Ovary (tissue), 10 donors: ENCODE measurements at regions of chr16 and their contacts with region 1.

Region 1: DNA sequence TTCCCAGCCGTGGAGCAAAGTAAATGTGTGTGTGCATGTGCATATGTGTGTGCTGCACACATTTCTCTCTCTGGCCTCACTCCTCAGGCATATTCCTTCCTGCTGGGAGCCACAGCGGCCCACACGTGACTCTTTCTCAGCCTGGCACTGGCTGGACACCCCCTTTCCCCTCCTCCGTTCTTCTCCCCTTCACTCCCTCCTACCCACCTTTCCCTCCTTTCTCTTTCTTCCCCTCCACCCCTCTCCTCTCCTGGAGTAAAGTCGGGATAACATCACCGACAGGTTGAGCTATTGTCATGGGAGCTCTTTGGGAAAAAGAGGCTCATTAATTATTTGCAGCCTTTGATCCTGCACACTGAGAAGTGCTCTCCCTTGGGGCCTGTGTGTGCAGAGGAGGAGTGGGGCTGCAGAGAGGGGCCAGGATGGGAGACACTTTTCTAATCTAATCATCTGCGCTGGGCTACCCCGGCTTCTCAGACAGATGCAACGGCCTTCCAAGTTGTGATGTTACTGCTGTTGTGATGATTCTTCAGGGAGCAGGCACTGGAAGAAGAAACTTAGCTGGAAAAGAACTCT is 126.3 kb upstream of the HSBP1 start:
- DNase-seq: no peak
- H3K4me3 ChIP-seq: no peak overlapping the region
- H3K27ac ChIP-seq: no peak overlapping the region
- H3K4me1 ChIP-seq: no peaks in the 10 kb centered on the region
- H3K27me3 ChIP-seq: no peaks in the 10 kb centered on the region
- CTCF ChIP-seq: no peak
- EP300 ChIP-seq: no peak
- POLR2A ChIP-seq: no peak

Region 2: DNA sequence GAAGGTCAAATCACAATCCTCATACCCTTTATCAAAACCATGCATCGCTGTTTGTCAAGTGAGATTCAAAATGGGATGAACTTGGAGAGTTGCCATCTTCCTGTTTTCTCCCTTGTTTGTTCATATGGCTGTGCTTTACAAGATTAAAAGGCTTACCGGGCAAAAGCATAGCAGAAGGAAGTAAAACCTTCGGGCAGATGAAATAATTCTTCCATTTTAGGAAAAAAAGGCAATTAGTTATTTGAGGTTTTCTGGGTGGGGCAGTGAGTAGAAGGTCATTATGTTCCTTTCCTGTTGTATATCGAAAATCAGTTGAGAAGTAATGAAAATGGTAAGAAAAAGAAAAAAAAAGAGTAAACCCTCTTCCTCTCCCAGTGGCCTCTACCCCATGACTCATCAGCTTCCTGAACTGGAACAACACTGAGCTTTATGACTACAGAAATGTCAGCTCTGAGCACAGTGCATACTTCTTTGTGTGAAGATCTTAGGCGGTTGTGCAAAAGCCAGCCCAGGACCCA is 685.5 kb before region 1 on chr16:
- intact Hi-C with region 1: loop called in 1 of 4 experiments (anchors 2 kb)
- DNase-seq: no peak
- H3K4me3 ChIP-seq: no peak overlapping the region
- H3K27ac ChIP-seq: no peak overlapping the region
- H3K4me1 ChIP-seq: no peaks in the 10 kb centered on the region
- H3K27me3 ChIP-seq: no peaks in the 10 kb centered on the region
- CTCF ChIP-seq: no peak
- EP300 ChIP-seq: no peak
- POLR2A ChIP-seq: no peak

Region 3: DNA sequence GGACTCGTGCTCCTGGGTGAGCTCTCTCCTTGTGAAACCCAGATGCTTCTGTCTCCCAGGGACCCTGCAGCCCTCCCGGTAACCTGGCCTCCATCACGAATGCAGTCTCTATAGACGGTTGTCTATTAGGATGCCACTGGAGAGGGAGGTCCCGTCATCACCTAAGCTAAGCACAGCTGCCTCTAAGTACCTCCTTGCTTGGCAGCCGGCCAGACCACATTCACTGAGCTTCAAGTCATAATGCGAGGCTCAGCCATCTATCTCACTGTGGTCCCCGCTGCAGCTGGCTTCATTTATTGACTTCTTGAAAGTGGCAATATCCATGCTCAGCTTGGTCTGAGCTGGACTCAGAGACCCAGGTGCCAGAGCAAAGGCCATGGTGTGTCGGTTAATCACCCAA is 51.8 kb after region 1 on chr16:
- intact Hi-C with region 1: no loop called
- DNase-seq: no peak
- H3K4me3 ChIP-seq: no peak overlapping the region
- H3K27ac ChIP-seq: no peak overlapping the region
- H3K4me1 ChIP-seq: no peaks in the 10 kb centered on the region
- H3K27me3 ChIP-seq: no peaks in the 10 kb centered on the region
- CTCF ChIP-seq: no peak
- EP300 ChIP-seq: no peak
- POLR2A ChIP-seq: no peak

Region 4: GRCh38 chr16:83771306-83771942 is 90.0 kb after region 1 on chr16:
- intact Hi-C with region 1: no loop called
- DNase-seq: peak in 2 of 5 donors; percentile 13 to 18
- H3K4me3 ChIP-seq: no peak overlapping the region
- H3K27ac ChIP-seq: no peak overlapping the region
- H3K4me1 ChIP-seq: no peaks in the 10 kb centered on the region
- H3K27me3 ChIP-seq: no peaks in the 10 kb centered on the region
- CTCF ChIP-seq: no peak
- EP300 ChIP-seq: no peak
- POLR2A ChIP-seq: no peak

Region 5: GRCh38 chr16:83856792-83857191 is 175.3 kb after region 1 on chr16:
- intact Hi-C with region 1: no loop called
- DNase-seq: no peak
- H3K4me3 ChIP-seq: no peak overlapping the region
- H3K27ac ChIP-seq: no peak overlapping the region
- H3K4me1 ChIP-seq: no peaks in the 10 kb centered on the region
- H3K27me3 ChIP-seq: no peaks in the 10 kb centered on the region
- CTCF ChIP-seq: no peak
- EP300 ChIP-seq: no peak
- POLR2A ChIP-seq: no peak